Activated CD8-positive, alpha-beta memory T cell treated with anti-CD3 and anti-CD28 coated beads, Interleukin-2, amount 10 ng/mL, durations not matched to agents 7 days and 5 days (primary cell): ENCODE measurements at regions of chr22 and their contacts with region 1.

Region 1: GRCh38 chr22:32474635-32475467 is at the start of gene FBXO7:
- DNase-seq: peak; percentile 91
- ATAC-seq: peak; percentile 86
- H3K4me3 Mint-ChIP-seq: peak within 1 kb of the TSS; percentile 92
- H3K27ac Mint-ChIP-seq: peak within 1 kb of the TSS; percentile 96
- H3K4me1 Mint-ChIP-seq: peaks cover 23% of the 10 kb centered on the region
- H3K27me3 Mint-ChIP-seq: peaks cover 2% of the 10 kb centered on the region
- total RNA-seq, gene FBXO7: 98.9 to 108 TPM

Region 2: DNA sequence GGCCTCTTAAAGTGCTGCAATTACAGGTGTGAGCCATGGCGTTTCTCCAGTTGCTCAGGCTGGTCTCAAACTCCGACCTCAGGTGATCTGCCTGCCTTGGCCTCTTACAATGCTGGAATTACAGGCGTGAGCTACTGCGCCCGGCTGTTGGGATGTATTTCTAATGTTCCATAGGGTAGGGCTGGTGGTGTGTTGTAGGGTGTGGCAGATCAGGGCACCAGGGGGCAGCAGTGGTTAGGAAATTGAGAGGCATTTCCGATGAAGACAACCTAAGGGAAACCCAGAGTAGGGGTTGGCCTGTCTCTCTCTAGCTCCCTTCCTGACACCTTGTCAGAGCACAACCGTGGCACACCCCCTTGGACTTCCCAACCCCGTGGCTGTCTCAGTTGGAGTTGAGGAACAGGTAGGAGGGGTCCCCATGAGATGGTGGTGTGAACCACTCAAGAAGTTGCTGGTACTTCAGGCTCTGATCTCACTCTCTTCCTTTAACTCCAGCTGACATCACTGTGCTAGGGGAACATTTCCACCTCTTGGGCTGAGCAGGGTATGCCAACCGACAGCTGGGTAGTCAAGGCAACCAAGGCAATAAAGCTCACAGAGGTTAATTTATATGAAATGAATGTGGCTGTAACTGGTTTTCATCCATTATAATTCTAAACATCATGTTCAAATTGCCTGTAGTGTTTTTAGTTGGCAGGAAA is 497.6 kb before region 1 on chr22:
- CTCF ChIA-PET with region 1: interaction called, 15 read pairs
- DNase-seq: peak; percentile 86
- ATAC-seq: peak; percentile 96
- H3K4me3 Mint-ChIP-seq: no peak overlapping the region
- H3K27ac Mint-ChIP-seq: no peak overlapping the region
- H3K4me1 Mint-ChIP-seq: peaks cover 5% of the 10 kb centered on the region
- H3K27me3 Mint-ChIP-seq: peaks cover 14% of the 10 kb centered on the region

Region 3: DNA sequence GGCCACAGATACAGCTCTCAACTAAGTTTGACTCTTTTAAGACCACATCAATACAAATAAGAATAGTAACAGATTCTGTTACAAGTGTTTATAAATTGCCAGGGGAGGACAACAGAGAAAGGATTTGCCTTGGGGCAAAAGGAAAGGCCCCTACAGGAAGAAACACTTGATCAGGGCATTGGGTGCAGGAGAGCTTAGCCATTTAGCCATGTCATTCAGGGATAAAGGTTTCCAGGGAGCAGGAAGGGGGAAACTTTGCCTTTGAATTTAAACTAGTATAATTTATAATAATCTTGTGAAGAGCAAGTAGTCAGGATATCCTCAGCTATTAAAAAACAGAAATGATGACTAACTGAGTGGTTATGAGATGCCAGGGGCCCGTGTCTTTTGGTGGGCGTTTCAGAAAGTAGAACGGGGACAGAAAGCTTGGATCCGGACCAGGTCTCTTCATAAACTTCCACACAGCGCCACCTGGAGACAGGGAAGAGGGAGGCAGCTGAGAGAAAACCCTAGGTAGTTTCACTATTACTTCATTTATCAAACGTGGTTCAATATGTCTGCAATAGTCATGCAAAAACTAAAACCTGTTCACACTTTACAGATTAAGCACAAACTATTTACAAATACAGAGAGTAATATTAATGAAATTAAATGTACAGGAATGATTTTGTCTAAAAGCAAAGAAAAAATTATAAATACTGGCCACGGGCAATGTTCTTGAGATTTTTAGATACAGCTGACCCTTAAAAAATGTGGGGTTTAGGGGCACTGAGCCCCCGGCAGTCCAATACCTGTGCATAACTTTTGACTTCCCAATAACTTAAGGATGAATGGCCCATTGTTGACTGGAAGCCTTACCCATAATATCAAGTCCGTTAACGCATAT is 208.7 kb before region 1 on chr22:
- CTCF ChIA-PET with region 1: interaction called, 12 read pairs
- DNase-seq: peak; percentile 82
- ATAC-seq: peak; percentile 85
- H3K4me3 Mint-ChIP-seq: no peak overlapping the region
- H3K27ac Mint-ChIP-seq: no peak overlapping the region
- H3K4me1 Mint-ChIP-seq: peaks cover 6% of the 10 kb centered on the region
- H3K27me3 Mint-ChIP-seq: peaks cover 11% of the 10 kb centered on the region

Region 4: DNA sequence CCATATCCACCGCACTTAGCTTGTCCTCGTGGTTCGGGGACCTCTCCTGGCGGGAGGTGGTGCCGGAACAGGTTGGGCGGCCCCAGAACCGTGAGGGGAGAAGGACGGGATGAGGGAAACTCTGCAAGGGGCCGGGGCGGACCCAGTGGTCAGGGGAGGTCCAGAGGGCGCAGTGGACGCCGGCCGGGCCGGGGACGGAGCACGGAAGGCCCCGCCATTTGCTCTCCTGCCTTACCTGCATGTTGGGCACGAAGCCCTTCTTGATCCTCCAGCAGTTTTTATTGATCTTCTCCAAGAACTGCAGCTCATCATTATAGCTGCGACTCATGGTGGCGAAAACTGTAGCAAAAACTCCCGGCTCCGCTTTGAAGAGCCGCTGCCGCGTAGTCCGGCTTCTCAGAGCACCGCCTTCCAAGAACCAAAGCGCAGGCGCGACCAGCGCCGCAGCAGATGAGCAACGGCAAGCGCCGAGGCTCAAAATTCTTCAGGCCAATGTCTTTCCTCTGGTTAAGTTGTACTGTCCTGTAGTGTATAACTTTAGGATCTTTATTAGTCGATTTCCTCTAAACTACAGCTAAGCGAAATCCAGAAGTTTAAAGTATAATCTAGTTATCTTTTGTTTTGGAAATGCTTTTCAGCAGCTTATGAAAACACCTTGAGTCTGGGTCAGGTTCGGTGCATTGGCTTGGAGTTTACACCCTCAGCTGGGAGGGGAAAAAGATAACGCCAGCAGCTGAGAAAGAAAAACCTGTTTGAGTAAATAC is 62.8 kb before region 1 on chr22 and contains the start of gene RTCB:
- CTCF ChIA-PET with region 1: interaction called, 19 read pairs
- DNase-seq: peak; percentile 93
- ATAC-seq: peak; percentile 89
- H3K4me3 Mint-ChIP-seq: peak within 1 kb of the TSS; percentile 88
- H3K27ac Mint-ChIP-seq: peak within 1 kb of the TSS; percentile 91
- H3K4me1 Mint-ChIP-seq: peaks cover 51% of the 10 kb centered on the region
- H3K27me3 Mint-ChIP-seq: peaks cover 11% of the 10 kb centered on the region
- total RNA-seq, gene RTCB: 77.2 to 85.5 TPM

Region 5: DNA sequence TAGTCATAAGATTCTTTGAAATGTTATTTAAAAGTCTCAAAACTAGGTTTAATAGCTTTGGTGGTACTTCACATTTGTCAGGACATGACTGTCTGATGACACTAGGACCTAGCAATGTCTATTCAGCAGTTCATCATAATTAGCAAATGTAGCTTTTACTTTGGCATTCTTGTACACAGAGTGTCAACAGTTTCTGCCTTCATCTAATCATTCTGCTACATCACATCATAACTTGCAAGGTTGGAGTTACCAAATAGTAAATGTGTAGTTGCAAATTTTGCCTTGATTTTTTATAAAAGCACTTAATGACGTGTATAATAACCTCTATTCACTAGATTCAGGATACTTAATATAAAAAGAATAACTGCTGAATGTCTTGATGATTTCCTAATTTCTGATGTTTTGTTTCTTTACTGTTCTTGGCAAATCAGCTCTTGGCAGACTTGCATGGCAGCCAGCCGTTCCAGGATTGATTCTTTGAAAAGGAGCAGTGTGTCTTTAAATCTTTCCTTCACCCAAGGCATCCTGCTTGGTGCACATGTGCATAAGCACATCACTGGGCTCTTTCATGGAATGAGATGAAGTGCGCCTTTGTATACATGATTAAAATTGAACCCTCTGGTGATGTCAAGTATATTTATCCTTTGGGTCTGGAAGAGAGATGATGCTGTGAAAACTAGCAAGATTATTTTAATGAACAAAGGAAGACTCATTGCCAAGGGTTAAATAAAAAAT is 12.0 kb after region 1 on chr22:
- CTCF ChIA-PET with region 1: interaction called, 14 read pairs
- DNase-seq: no peak
- ATAC-seq: no peak
- H3K4me3 Mint-ChIP-seq: no peak overlapping the region
- H3K27ac Mint-ChIP-seq: no peak overlapping the region
- H3K4me1 Mint-ChIP-seq: peaks cover 8% of the 10 kb centered on the region
- H3K27me3 Mint-ChIP-seq: no peaks in the 10 kb centered on the region